Heart right ventricle (tissue), 16 donors: ENCODE measurements at regions of chr9 and their contacts with region 1.

Region 1: GRCh38 chr9:76067696-76068095 is 177.2 kb downstream of the PCSK5 start:
- DNase-seq: no peak
- ATAC-seq: no peak
- H3K4me3 ChIP-seq: no peak overlapping the region
- H3K27ac ChIP-seq: no peak overlapping the region
- H3K4me1 ChIP-seq: no peaks in the 10 kb centered on the region
- H3K27me3 ChIP-seq: no peaks in the 10 kb centered on the region
- CTCF ChIP-seq: no peak

Region 2: GRCh38 chr9:76107482-76107881 is 39.8 kb after region 1 on chr9:
- intact Hi-C with region 1: loop called in 1 of 10 experiments (anchors 5 kb)
- DNase-seq: peak in 1 of 2 donors; percentile 12
- ATAC-seq: peak in 7 of 8 donors; percentile 51 to 84 (median 68)
- H3K4me3 ChIP-seq: no peak overlapping the region
- H3K27ac ChIP-seq: no peak overlapping the region
- H3K4me1 ChIP-seq: peaks cover 0 to 19% (median 4%) of the 10 kb centered on the region in 9 donors
- H3K27me3 ChIP-seq: no peaks in the 10 kb centered on the region
- CTCF ChIP-seq: no peak